CD4-positive, alpha-beta memory T cell (primary cell): ENCODE measurements at regions of chr1 and their contacts with region 1.

Region 1: DNA sequence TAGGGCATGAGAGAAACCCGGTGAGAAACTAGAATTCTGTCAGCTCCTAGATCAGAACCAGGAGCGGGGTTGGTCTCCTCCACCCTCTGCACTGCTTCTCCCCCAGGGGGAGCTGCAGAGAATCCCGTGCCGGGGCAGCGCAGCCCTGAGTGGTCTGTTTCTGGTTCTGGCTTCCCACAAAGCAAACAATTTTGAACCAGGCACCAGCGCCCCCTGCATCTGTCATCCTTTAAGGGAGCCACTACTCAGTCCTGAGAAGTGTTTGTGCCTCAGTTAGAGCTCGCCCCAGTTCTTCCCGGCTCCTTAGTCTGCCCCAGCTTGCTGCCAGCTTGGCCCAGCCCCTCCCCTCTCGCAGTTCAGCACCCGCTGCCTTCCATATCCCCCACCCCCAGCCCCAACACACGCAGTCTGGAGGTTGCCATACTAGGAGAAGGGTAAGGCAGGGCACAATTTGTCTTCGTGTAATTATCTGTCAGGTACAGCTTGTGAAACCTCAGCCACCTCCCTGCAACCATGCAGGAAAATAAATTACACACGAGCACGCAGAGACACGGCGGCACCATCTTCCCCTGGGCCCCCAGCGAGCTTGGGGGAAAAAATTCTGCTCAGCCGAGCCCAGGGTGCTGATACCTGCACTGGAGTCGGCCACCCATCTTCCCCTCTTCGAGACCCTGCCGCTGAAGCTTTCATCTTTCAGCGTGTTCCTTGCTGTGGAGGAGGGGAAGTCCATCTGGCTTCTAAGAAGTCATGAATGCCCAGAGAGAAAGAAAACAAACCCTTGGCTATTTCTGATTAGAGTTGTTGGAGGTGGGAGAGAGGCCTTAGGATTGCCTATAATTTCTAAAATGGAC is 62.6 kb upstream of the CD1D start:
- DNase-seq: peak in 3 of 5 donors; percentile 33 to 43 (median 43)
- H3K4me3 ChIP-seq: no peak overlapping the region
- H3K4me3 Mint-ChIP-seq: peak overlapping the region in 6 of 8 donors; percentile 1 to 78 (median 60)
- H3K27ac ChIP-seq: no peak overlapping the region
- H3K27ac Mint-ChIP-seq: no peak overlapping the region
- H3K4me1 ChIP-seq: peaks cover 13% of the 10 kb centered on the region
- H3K4me1 Mint-ChIP-seq: peaks cover 10 to 12% (median 11%) of the 10 kb centered on the region in 4 donors
- H3K27me3 ChIP-seq: peaks cover 10% of the 10 kb centered on the region
- H3K27me3 Mint-ChIP-seq: peaks cover 29 to 52% of the 10 kb centered on the region in 2 donors

Region 2: DNA sequence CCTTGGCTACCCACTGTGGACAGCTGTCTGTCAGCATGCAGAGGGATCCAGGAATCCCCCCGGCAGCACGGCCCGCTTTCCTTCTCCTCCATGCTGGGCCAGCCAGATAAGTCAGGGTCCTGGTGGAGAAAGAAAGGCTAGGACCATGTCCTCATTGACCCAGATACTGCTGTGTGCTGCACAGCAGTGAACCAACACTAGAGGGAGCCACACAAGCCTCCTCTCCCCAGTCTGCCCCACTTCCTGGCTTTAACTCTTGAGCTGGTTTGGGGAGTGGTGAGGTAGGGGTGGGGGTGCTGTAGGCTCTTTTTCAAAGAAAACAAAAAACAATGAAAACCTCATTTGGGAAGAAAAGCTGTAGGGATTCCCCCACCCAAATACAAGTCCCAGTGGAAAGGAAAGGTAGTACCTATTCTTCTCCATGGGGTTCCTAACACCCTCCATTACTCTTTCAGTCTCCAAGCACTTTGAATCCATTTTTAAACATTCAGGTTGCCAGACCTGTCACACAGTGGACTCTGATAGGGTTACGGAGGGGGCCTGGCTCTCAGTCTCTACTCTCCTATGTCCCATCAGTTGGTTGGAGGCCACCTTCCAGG is 22.2 kb before region 1 on chr1:
- CTCF ChIA-PET with region 1: interaction called, 89 read pairs
- POLR2A ChIA-PET with region 1: no interaction called
- intact Hi-C with region 1: no loop called
- DNase-seq: peak in 3 of 5 donors; percentile 9 to 14 (median 10)
- H3K4me3 ChIP-seq: no peak overlapping the region
- H3K4me3 Mint-ChIP-seq: no peak overlapping the region
- H3K27ac ChIP-seq: no peak overlapping the region
- H3K27ac Mint-ChIP-seq: no peak overlapping the region
- H3K4me1 ChIP-seq: no peaks in the 10 kb centered on the region
- H3K4me1 Mint-ChIP-seq: no peaks in the 10 kb centered on the region
- H3K27me3 ChIP-seq: no peaks in the 10 kb centered on the region
- H3K27me3 Mint-ChIP-seq: peaks cover 3 to 10% of the 10 kb centered on the region in 2 donors